ENCODE measurements at regions of chr10 and their contacts with region 1.

Region 1: GRCh38 chr10:58299580-58299979 is 30.6 kb downstream of the CISD1 start:
- DNase-seq: peak; percentile 83 to 90
- H3K4me3 ChIP-seq: peak overlapping the region; percentile 3; the same call in 1 of the 2 replicates
- H3K4me3 Mint-ChIP-seq: peak overlapping the region; percentile 37
- H3K27ac Mint-ChIP-seq: no peak overlapping the region
- H3K4me1 ChIP-seq: peaks cover 10% of the 10 kb centered on the region
- H3K4me1 Mint-ChIP-seq: peaks cover 9% of the 10 kb centered on the region
- H3K27me3 ChIP-seq: no peaks in the 10 kb centered on the region
- H3K27me3 Mint-ChIP-seq: no peaks in the 10 kb centered on the region
- CTCF ChIP-seq: peak; percentile 97 to 99

Region 2: DNA sequence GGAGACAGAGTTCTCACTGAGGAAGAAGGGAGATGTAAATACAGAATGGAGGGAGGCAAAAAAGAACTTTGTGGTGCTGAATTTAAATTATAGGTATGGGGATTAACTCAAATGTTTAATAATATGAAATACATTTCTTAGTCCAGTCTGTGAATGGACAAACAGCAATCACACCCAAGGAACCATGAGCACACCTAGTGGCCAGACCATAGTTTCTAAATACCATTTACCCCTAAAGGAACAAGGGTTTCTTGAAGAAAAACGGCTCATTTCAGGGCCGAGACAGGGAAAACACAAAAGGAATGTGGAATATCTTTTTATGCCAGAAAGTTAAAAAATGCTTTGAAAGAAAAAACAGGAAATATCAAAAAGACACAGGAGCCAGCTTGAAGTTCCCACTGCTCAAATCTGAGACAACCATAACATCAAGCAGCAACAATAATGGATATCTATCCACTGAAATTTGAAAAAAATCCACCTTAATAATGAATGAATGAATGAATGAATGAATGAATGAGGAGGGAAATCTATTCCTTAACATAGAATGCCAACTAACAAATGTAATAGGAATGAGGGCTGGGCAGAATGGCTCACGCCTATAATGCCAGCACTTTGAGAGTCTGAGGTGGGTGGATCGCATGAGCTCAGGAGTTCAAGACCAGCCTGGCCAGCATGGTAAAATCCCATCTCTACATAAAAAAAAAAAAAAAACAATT is 40.4 kb before region 1 on chr10:
- CTCF ChIA-PET with region 1: no interaction called
- POLR2A ChIA-PET with region 1: no interaction called
- intact Hi-C with region 1: no loop called
- DNase-seq: no peak
- H3K4me3 ChIP-seq: no peak overlapping the region
- H3K4me3 Mint-ChIP-seq: no peak overlapping the region
- H3K27ac Mint-ChIP-seq: no peak overlapping the region
- H3K4me1 ChIP-seq: peaks cover 18% of the 10 kb centered on the region
- H3K4me1 Mint-ChIP-seq: peaks cover 15% of the 10 kb centered on the region
- H3K27me3 ChIP-seq: no peaks in the 10 kb centered on the region
- H3K27me3 Mint-ChIP-seq: no peaks in the 10 kb centered on the region
- CTCF ChIP-seq: peak; percentile 1 to 47

Region 3: DNA sequence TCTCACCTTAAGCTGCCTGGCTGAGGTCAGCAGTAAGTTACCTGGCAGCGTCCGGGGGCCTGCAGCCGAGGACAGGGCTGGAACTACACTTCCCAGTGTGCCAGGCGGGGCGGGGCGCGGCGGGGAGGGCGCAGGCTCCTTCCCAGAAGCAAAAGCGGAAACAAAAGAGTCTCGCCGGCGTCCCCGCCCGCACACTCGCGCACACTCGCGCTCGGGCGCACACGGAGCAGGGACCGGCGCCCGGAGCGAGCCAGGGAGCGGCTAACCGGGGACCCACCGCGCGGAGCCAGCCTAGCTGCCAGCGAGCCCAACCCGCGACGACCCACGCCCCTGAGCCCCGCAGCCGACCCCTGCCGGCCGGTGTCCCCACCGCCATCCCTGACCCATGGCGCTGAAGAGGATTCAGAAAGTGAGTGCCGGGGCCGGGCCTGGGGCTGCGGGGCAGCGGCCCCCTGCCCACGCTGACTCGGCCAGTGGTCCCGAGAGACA is 35.3 kb after region 1 on chr10 and contains the start of gene UBE2D1:
- CTCF ChIA-PET with region 1: interaction called, 4 read pairs
- POLR2A ChIA-PET with region 1: no interaction called
- intact Hi-C with region 1: loop called (anchors 1 kb)
- DNase-seq: peak; percentile 95 to 97
- H3K4me3 ChIP-seq: peak within 1 kb of the TSS; percentile 83
- H3K4me3 Mint-ChIP-seq: peak within 1 kb of the TSS; percentile 84
- H3K27ac Mint-ChIP-seq: peak within 1 kb of the TSS; percentile 84
- H3K4me1 ChIP-seq: peaks cover 8% of the 10 kb centered on the region
- H3K4me1 Mint-ChIP-seq: peaks cover 16% of the 10 kb centered on the region
- H3K27me3 ChIP-seq: no peaks in the 10 kb centered on the region; the same call in 1 of the 2 replicates
- H3K27me3 Mint-ChIP-seq: peaks cover 8% of the 10 kb centered on the region
- CTCF ChIP-seq: peak; percentile 45 to 59
- total RNA-seq, gene UBE2D1: 35.1 and 39.7 TPM in 2 replicates

Region 4: GRCh38 chr10:58513188-58514110 is 213.9 kb after region 1 on chr10:
- CTCF ChIA-PET with region 1: no interaction called
- POLR2A ChIA-PET with region 1: no interaction called
- intact Hi-C with region 1: loop called (anchors 5 kb)
- DNase-seq: peak; percentile 89 to 91
- H3K4me3 ChIP-seq: peak overlapping the region; percentile 98
- H3K4me3 Mint-ChIP-seq: peak overlapping the region; percentile 94
- H3K27ac Mint-ChIP-seq: peak overlapping the region; percentile 78
- H3K4me1 ChIP-seq: peaks cover 33% of the 10 kb centered on the region
- H3K4me1 Mint-ChIP-seq: peaks cover 19% of the 10 kb centered on the region
- H3K27me3 ChIP-seq: no peaks in the 10 kb centered on the region
- H3K27me3 Mint-ChIP-seq: no peaks in the 10 kb centered on the region
- CTCF ChIP-seq: no peak